ENCODE measurements at regions of chr6 and their contacts with region 1.

Region 1: DNA sequence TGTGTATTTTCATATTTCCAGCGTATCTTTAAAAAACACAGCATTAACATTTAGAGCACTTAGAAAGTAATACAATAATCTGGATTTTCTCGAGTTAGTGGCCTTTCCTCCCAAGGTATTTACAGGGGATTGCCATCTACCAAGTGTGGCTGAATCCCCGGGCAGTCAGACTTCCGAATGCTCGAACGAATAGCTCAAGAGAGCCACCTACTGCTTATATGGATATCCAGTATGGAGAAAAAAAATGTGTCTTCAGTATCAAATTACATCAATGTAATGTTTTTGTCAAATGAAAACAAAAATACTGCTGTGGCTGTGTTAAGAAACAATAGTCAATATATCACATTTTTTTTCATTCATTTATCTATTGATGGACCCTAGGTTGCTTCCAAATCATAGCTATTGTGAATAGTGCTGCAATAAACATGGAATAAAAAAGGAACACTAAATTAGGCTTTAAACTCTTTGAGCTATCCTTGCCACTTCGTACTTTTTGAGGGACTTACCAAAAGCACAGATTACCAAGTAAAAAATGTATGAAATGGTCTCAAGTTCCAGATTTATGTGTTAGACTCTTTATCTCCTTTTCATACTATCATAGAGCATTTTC is 654.5 kb upstream of the PTCHD4 start:
- DNase-seq: peak; percentile 58
- H3K4me3 ChIP-seq: no peak overlapping the region
- H3K27ac ChIP-seq: peak overlapping the region; percentile 62
- H3K4me1 ChIP-seq: peaks cover 17% of the 10 kb centered on the region
- H3K27me3 ChIP-seq: no peaks in the 10 kb centered on the region
- CTCF ChIP-seq: peak; percentile 64 to 75

Region 2: GRCh38 chr6:48087448-48087847 is 678.0 kb before region 1 on chr6:
- CTCF ChIA-PET with region 1: no interaction called
- dilution Hi-C with region 1: no loop called
- in situ Hi-C with region 1: loop called in 1 of 2 experiments (anchors 10 kb)
- intact Hi-C with region 1: loop called (anchors 1 kb)
- DNase-seq: no peak
- H3K4me3 ChIP-seq: no peak overlapping the region
- H3K27ac ChIP-seq: no peak overlapping the region
- H3K4me1 ChIP-seq: no peaks in the 10 kb centered on the region
- H3K27me3 ChIP-seq: no peaks in the 10 kb centered on the region
- CTCF ChIP-seq: peak; percentile 44 to 48

Region 3: DNA sequence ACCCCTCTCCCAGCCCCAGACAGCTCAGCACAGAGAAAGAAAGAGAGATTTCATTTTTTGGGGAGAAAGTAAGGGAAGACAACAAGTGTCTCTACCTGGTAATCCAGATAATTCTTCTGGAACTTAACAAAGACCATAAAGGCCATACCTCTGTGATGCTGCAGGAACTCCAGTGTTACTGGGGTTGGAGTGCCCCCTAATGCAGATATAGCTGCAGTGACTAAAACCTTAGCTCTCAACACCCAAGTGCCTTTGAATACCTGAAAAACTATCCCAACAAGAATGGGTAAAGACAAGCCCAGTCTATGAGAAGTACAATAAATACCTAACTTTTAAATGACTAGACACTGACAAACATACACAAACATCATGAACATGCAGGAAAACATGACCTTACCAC is 289.2 kb before region 1 on chr6:
- CTCF ChIA-PET with region 1: interaction called, 5 read pairs
- dilution Hi-C with region 1: no loop called
- in situ Hi-C with region 1: no loop called
- intact Hi-C with region 1: loop called (anchors 2 kb)
- DNase-seq: peak; percentile 40
- H3K4me3 ChIP-seq: no peak overlapping the region
- H3K27ac ChIP-seq: no peak overlapping the region
- H3K4me1 ChIP-seq: peaks cover 16% of the 10 kb centered on the region
- H3K27me3 ChIP-seq: no peaks in the 10 kb centered on the region
- CTCF ChIP-seq: peak; percentile 47 to 60

Region 4: DNA sequence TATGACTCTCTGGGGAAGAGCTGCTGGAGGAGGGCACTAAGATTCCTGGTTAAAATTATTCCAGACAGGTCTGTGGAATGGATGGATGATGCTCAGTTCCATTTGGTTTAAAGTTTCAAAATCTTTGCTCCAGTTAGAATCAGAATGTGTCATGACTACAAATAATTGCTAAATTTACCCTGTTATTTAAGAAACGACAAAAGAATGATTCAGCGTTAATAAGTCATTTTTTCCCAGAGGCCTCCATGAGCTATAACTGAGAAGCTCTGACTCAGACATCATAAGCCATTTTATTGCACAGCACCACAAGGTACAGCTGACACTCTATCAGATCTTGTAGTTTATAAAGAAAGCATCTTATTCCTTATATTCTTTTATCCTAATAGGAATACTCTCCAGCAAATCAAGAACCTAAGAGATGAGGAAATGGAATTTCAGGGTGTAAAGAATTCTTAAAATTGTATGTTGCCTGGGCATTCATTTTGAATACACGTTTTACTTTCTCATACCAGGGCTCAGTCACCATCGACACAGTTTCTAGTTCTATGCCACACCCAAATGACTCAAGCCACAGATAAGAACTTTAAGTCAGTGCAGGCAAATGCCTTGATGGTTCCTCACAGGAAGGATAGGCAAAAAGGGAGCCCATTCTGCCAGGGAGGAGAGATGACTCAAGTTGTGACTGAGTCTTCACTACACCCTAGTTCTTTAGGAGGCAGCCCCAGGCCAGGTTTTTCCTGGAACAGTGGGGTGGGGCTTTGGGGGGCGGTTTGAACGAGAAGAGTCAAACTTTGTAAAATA is 61.6 kb after region 1 on chr6:
- CTCF ChIA-PET with region 1: no interaction called
- dilution Hi-C with region 1: no loop called
- in situ Hi-C with region 1: no loop called
- intact Hi-C with region 1: loop called (anchors 1 kb)
- DNase-seq: peak; percentile 100
- H3K4me3 ChIP-seq: peak overlapping the region in 2 of 3 experiments; percentile 8 to 12
- H3K27ac ChIP-seq: peak overlapping the region; percentile 98
- H3K4me1 ChIP-seq: peaks cover 22% of the 10 kb centered on the region
- H3K27me3 ChIP-seq: no peaks in the 10 kb centered on the region
- CTCF ChIP-seq: no peak

Region 5: GRCh38 chr6:48844696-48845095 is 79.2 kb after region 1 on chr6:
- CTCF ChIA-PET with region 1: no interaction called
- dilution Hi-C with region 1: no loop called
- in situ Hi-C with region 1: no loop called
- intact Hi-C with region 1: no loop called
- DNase-seq: peak; percentile 90
- H3K4me3 ChIP-seq: no peak overlapping the region
- H3K27ac ChIP-seq: peak overlapping the region; percentile 52
- H3K4me1 ChIP-seq: peaks cover 14% of the 10 kb centered on the region
- H3K27me3 ChIP-seq: no peaks in the 10 kb centered on the region
- CTCF ChIP-seq: no peak

Region 6: GRCh38 chr6:49409951-49410542 is 644.6 kb after region 1 on chr6:
- CTCF ChIA-PET with region 1: no interaction called
- dilution Hi-C with region 1: no loop called
- in situ Hi-C with region 1: no loop called
- intact Hi-C with region 1: loop called (anchors 1 kb)
- DNase-seq: peak; percentile 57
- H3K4me3 ChIP-seq: no peak overlapping the region
- H3K27ac ChIP-seq: no peak overlapping the region
- H3K4me1 ChIP-seq: peaks cover 5% of the 10 kb centered on the region
- H3K27me3 ChIP-seq: no peaks in the 10 kb centered on the region
- CTCF ChIP-seq: peak; percentile 86 to 96

Measured in mammary epithelial cell (primary cell).